ENCODE measurements at regions of chr7 and their contacts with region 1.

Region 1: DNA sequence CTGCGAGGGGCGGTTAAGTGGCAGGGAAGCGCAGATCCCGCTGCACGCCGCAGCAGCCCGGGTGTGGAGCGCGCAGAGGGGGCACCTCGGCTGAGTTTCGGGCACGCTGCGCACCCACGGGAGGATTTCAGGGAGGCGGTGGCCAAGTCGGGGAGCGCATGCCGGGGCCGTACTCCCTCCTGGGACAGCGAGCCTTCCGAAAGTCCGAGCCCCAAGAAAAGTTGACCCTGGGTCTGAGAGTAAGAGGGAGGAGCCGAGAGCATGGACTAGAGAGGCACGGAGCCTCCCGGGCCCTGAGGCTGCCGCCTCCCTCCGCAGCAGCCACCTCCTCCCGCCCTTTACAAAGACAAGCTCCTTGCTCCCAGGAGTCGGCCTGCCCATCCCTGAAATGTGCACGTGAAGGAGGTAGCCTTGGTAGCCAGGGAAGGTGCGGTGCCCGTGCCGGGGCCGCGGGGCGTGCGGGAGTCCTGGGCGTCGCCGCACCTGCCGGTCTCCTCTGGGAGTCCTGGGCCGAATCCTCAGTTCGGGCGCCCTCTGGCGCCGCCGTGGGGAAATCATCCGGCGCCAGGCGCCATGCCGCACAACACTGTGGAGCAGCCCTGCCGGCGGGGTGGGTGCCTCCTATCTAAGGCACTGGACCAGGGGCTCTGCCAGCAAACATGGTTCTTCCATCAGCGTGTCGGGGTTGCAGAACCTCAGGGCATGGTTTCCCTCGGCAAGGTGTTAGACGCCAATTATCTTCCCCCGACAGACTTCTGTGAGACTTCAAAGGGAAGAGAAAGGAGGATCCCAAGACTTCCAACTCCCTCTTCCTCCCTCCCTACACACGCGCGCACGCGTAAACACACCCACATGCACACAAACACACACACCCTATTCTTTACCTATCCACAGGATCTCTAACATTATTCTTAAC is 104.0 kb downstream of the TRIL start:
- H3K4me3 ChIP-seq: peak overlapping the region; percentile 66
- H3K27ac ChIP-seq: peak overlapping the region; percentile 53; the same call in 1 of the 2 replicates
- H3K4me1 ChIP-seq: peaks cover 17% of the 10 kb centered on the region
- CTCF ChIP-seq: peak; percentile 90

Region 2: GRCh38 chr7:28868712-28869111 is 14.6 kb after region 1 on chr7:
- CTCF ChIA-PET with region 1: interaction called, 24 read pairs
- POLR2A ChIA-PET with region 1: no interaction called
- H3K4me3 ChIP-seq: no peak overlapping the region
- H3K27ac ChIP-seq: no peak overlapping the region
- H3K4me1 ChIP-seq: peaks cover 23% of the 10 kb centered on the region
- CTCF ChIP-seq: no peak

Measured in HEK293 (cell line).